Mammary epithelial cell (primary cell): ENCODE measurements at regions of chr22 and their contacts with region 1.

Region 1: GRCh38 chr22:22748297-22748743 is 103.9 kb downstream of the GGTLC2 start:
- DNase-seq: peak; percentile 31
- H3K4me3 ChIP-seq: no peak overlapping the region
- H3K27ac ChIP-seq: no peak overlapping the region
- H3K4me1 ChIP-seq: no peaks in the 10 kb centered on the region
- H3K27me3 ChIP-seq: no peaks in the 10 kb centered on the region
- CTCF ChIP-seq: peak; percentile 72 to 81

Region 2: DNA sequence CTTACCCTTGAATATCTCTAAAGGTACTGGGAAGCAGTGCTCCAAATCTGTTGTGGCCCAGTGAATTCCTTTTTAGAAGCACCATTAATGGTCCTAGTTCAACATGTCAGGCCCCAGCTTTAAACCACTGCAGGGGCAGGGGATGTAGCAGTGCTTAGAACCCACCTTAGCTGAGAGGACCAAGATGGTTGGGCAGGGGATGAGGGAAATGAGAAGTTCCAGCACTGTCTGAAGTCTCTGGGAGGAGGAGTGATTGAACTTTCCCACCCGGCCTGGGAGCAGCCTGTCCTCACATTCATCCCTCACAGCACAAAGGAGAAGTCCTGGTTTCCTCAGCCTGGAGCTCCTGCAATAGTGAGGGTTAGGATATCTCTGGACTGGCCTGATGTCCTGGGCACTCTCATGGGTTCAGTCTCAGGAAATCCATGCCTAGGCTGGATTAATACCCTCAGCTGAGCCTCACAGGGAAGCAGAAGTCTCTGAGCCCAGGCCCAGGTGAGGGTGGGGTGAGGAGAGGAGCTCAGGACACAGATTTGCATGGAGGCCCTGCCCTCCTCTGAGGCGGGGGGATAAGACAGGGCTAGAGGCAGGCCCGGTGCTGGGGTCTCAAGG is 160.6 kb before region 1 on chr22:
- CTCF ChIA-PET with region 1: no interaction called
- dilution Hi-C with region 1: no loop called
- in situ Hi-C with region 1: no loop called
- intact Hi-C with region 1: loop called (anchors 2 kb)
- DNase-seq: no peak
- H3K4me3 ChIP-seq: no peak overlapping the region
- H3K27ac ChIP-seq: no peak overlapping the region
- H3K4me1 ChIP-seq: no peaks in the 10 kb centered on the region
- H3K27me3 ChIP-seq: no peaks in the 10 kb centered on the region
- CTCF ChIP-seq: no peak

Region 3: DNA sequence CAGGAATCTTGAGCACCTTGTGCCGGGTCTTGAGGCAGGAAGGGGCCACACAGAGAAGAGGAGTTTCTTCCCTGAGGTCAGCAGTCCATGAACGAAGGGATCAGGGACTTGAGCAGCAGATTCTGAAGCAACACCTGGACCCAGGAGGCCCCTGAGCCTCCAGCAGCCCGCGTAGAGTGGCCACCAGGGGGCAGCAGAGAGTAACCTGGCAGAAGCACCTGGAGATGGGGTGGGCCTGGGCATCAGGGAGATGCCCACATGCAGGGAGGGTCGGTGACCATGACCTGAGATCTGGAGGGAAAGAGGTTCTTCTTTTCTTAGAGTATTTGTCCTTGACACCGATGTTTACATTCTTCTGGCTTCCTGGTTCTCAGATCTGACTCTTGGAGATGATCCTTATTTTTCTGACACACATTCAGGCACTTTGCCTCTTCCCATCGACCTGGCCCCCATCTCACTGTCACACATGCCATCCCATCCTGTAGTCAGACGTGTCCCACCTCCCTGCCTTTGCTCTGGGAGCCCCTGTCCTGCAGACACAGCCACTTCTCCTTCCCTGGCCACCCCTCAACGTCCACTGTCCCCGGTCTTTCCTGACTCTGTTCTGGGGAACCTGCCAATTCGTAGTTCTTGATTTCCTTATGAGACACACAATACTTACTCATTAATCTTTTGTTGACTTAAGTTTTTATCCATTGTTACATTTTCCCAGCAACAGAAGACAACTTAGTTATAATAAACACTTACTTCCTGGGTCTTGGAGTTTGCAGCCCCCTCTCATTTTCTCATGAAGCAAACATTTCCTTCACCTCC is 37.4 kb before region 1 on chr22:
- CTCF ChIA-PET with region 1: no interaction called
- dilution Hi-C with region 1: no loop called
- in situ Hi-C with region 1: no loop called
- intact Hi-C with region 1: loop called (anchors 1 kb)
- DNase-seq: no peak
- H3K4me3 ChIP-seq: no peak overlapping the region
- H3K27ac ChIP-seq: no peak overlapping the region
- H3K4me1 ChIP-seq: no peaks in the 10 kb centered on the region
- H3K27me3 ChIP-seq: no peaks in the 10 kb centered on the region
- CTCF ChIP-seq: peak; percentile 80 to 96

Region 4: DNA sequence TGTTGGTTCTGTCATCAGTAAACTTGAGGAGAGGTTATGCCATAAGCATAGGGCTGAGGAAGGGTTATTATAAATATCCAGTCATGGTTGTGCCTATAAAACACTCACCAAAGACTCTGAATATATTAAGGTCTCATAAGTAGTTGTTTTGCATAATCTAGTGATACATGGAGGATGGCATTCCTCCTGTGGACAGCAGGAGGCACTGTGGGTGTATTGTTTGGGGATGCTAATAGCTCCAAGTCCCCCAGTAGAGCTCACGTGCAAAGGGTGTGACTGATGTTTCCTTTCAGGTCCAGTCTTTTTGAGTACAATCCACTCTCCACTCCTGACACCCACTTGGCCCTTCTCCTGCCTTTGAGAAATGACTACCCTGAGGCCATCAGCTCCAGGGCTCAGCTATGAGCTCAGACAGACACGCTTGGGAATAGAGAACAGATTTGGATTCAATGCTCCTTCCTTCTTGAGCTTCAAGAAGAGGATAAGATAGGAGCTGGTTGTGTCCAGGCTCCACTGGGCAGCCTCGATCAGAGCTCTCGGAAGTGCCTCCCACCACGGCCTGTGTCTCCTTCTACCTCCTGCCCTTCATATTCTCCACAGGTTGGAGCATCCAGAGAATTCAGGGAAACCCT is 54.1 kb after region 1 on chr22:
- CTCF ChIA-PET with region 1: no interaction called
- dilution Hi-C with region 1: no loop called
- in situ Hi-C with region 1: no loop called
- intact Hi-C with region 1: no loop called
- DNase-seq: no peak
- H3K4me3 ChIP-seq: no peak overlapping the region
- H3K27ac ChIP-seq: no peak overlapping the region
- H3K4me1 ChIP-seq: no peaks in the 10 kb centered on the region
- H3K27me3 ChIP-seq: no peaks in the 10 kb centered on the region
- CTCF ChIP-seq: peak; percentile 10 to 19